KBM-7 (cell line): ENCODE measurements at regions of chr6 and their contacts with region 1.

Region 1: GRCh38 chr6:119129148-119129967 is 50.9 kb upstream of the FAM184A start:
- DNase-seq: peak; percentile 72

Region 2: GRCh38 chr6:119463081-119463626 is 333.8 kb after region 1 on chr6:
- in situ Hi-C with region 1: loop called (anchors 25 kb)
- DNase-seq: no peak

Region 3: GRCh38 chr6:119541132-119541905 is 412.0 kb after region 1 on chr6:
- in situ Hi-C with region 1: no loop called
- DNase-seq: no peak

Region 4: GRCh38 chr6:119742188-119742803 is 612.9 kb after region 1 on chr6:
- in situ Hi-C with region 1: loop called (anchors 25 kb)
- DNase-seq: peak; percentile 80